Activated CD8-positive, alpha-beta T cell treated with anti-CD3 and anti-CD28 coated beads, Interleukin-2, amount 10 ng/mL, durations not matched to agents 7 days and 5 days (primary cell): ENCODE measurements at regions of chr9 and their contacts with region 1.

Region 1: DNA sequence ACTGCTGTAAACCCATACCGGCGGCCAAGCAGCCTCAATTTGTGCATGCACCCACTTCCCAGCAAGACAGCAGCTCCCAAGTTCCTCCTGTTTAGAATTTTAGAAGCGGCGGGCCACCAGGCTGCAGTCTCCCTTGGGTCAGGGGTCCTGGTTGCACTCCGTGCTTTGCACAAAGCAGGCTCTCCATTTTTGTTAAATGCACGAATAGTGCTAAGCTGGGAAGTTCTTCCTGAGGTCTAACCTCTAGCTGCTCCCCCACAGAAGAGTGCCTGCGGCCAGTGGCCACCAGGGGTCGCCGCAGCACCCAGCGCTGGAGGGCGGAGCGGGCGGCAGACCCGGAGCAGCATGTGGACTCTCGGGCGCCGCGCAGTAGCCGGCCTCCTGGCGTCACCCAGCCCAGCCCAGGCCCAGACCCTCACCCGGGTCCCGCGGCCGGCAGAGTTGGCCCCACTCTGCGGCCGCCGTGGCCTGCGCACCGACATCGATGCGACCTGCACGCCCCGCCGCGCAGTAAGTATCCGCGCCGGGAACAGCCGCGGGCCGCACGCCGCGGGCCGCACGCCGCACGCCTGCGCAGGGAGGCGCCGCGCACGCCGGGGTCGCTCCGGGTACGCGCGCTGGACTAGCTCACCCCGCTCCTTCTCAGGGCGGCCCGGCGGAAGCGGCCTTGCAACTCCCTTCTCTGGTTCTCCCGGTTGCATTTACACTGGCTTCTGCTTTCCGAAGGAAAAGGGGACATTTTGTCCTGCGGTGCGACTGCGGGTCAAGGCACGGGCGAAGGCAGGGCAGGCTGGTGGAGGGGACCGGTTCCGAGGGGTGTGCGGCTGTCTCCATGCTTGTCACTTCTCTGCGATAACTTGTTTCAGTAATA is at the start of gene FXN:
- DNase-seq: peak; percentile 84
- ATAC-seq: peak; percentile 95
- H3K4me3 Mint-ChIP-seq: peak within 1 kb of the TSS; percentile 93
- H3K27ac Mint-ChIP-seq: peak within 1 kb of the TSS; percentile 81
- H3K4me1 Mint-ChIP-seq: peaks cover 24% of the 10 kb centered on the region
- H3K27me3 Mint-ChIP-seq: peaks cover 2% of the 10 kb centered on the region
- total RNA-seq, gene FXN: 21.7 to 23.2 TPM

Region 2: DNA sequence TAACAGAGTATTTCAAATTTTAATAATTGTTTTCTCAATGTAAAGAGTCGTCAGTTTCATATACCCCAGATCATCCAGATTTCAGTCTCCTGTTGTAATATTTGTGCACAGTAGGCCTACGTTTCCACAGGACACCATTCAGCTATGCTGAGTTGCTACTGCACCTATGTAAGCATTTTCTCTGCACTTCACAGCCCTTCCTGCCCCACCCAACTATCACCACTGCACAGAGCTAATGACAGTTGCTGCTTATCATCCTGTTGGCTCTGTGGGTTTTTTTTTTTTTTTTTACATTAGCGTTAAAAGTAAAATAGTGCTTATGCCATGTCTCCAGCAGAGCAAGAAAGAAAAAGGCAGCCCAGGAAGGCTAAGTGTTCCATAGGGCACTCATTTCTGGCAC is 15.9 kb before region 1 on chr9:
- CTCF ChIA-PET with region 1: interaction called, 15 read pairs
- POLR2A ChIA-PET with region 1: interaction called, 11 read pairs
- DNase-seq: peak; percentile 68
- ATAC-seq: peak; percentile 92
- H3K4me3 Mint-ChIP-seq: no peak overlapping the region
- H3K27ac Mint-ChIP-seq: peak overlapping the region; percentile 83
- H3K4me1 Mint-ChIP-seq: peaks cover 44% of the 10 kb centered on the region
- H3K27me3 Mint-ChIP-seq: peaks cover 29% of the 10 kb centered on the region

Region 3: DNA sequence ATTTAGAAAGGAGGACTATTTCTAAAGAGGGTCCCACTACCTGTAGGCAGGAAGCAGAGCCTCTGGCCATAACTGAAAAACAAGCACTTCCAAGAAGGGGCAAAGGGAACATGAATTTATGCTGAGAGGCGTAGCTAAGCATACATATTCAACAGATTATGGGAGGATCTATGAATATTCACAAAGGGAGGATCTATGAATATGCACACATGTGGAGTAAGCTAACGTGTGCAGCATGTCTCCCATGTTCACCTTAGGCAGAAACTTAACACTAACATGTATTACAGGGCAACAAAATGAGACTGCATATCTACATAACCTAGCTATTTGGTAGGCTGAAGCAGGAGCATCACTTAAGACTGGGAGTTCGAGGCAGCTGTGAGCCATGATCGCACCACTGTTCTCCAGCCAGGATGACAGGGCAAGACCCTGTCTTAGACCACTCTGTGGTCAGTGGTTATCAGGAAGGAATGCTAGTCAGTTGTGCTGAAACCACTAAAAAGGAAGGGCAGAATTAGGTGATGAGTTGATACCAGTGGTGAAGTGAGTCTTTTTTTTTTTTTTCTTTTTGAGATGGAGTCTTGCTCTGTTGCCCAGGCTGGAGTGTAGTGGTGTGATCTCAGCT is 20.6 kb after region 1 on chr9:
- CTCF ChIA-PET with region 1: interaction called, 15 read pairs
- POLR2A ChIA-PET with region 1: no interaction called
- DNase-seq: no peak
- ATAC-seq: no peak
- H3K4me3 Mint-ChIP-seq: no peak overlapping the region
- H3K27ac Mint-ChIP-seq: no peak overlapping the region
- H3K4me1 Mint-ChIP-seq: peaks cover 29% of the 10 kb centered on the region
- H3K27me3 Mint-ChIP-seq: no peaks in the 10 kb centered on the region